Prostate gland (tissue), 2 donors: ENCODE measurements at regions of chr15 and their contacts with region 1.

Region 1: DNA sequence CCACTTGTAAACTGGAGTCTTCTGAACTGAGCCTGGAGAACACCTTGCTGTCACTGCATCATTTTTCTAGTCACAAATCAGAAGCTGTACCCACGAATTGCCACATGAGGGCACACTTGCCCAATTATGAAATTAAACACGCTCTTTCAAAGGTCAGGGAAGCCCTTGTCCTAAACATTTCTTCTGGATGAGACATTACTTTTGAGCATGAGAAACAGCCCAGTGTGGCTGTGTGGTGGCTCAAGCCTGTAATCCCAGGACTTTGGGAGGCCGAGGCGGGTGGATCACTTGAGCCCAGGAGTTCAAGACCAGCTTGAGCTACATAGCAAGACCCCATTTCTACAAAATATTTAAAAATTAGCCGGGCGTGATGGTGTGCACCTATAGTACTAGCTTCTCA is 27.5 kb upstream of the CFAP161 start:
- DNase-seq: peak; percentile 51
- H3K4me3 ChIP-seq: no peak overlapping the region
- H3K27ac ChIP-seq: no peak overlapping the region
- H3K4me1 ChIP-seq: no peaks in the 10 kb centered on the region
- H3K27me3 ChIP-seq: no peaks in the 10 kb centered on the region
- CTCF ChIP-seq: peak; percentile 42 to 81 (median 76)
- POLR2A ChIP-seq: no peak

Region 2: DNA sequence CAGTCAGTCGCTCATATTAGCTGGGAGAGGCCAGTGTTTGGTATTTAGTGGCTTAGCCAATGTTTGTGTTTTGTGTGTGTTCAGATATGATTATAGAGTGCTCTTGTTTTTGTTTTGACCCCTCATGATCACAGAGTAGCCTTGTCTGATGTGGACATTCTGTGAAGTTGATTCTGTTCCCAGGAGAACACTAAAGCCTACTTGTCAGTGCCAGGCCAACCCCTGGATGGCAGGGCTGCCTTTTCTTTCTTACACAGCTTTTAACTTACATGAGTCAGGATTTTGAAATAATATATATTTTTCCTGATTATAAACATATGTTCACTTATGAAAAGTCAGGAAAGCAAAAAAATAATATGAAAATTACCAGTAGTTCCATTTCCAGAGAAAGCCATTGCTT is 39.4 kb after region 1 on chr15:
- intact Hi-C with region 1: no loop called
- DNase-seq: no peak
- H3K4me3 ChIP-seq: no peak overlapping the region
- H3K27ac ChIP-seq: no peak overlapping the region
- H3K4me1 ChIP-seq: no peaks in the 10 kb centered on the region
- H3K27me3 ChIP-seq: no peaks in the 10 kb centered on the region
- CTCF ChIP-seq: no peak
- POLR2A ChIP-seq: no peak

Region 3: DNA sequence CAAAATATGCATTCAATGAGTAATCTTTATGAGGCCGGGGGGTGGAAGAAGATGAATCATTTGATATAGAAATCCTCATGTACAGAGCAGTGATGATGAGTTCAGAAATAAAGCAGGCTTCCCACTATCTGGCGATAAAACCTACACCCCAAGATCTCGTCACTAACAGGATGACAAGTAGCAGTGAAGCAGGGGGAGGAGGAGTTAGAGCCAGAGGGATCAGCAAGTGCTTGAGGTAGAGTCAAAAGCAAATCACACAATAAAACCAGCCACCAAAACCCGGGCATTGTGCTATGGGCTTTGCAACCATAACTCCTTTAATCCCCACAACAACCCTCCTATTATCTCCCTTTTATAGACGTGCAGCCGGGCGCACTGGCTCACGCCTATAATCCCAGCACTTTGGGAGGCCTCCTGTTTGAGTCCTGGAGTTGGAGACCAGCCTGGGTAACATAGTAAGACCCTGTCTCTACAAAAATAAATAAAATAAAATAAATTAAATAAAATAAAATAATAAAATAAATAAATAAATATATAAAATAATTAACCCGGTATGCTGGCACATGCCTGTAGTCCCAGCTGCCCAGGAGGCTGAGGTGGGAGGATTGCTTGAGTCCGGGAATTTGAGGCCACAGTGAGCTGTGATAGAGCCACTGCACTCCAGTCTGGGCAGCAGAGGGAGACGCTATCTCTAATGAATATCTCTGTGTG is 164.4 kb after region 1 on chr15:
- intact Hi-C with region 1: no loop called
- DNase-seq: no peak
- H3K4me3 ChIP-seq: no peak overlapping the region
- H3K27ac ChIP-seq: no peak overlapping the region
- H3K4me1 ChIP-seq: peaks cover under 1% of the 10 kb centered on the region
- H3K27me3 ChIP-seq: no peaks in the 10 kb centered on the region
- CTCF ChIP-seq: no peak
- POLR2A ChIP-seq: no peak

Region 4: DNA sequence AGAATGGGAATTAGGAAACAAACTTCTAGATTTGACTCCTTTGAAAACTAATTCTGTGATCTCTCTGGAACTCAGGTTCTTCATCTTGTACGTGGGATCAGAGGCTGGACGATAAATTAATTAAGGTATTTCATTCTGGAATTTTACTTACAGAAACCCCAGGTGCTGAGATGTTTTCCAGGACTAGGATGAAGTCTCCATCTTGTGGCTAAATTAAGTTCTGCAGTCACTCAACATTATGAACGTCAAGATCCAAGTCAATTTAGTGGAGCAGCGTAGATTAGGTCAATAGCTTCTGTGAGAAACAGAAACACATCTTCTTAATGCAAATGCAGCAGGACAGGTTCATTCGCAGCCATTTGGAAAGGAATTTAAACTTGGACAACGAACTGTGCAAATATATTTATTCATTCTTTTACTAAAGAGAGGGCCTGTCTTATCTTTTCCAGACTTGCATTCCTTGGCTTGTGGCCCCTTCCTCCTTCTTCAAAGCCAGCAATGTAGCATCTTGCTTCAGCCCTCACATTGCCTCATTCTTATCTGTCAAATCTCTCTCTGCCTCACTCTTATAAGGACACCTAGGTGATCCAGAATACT is 294.2 kb after region 1 on chr15:
- intact Hi-C with region 1: loop called (anchors 10 kb)
- DNase-seq: peak; percentile 42
- H3K4me3 ChIP-seq: no peak overlapping the region
- H3K27ac ChIP-seq: no peak overlapping the region
- H3K4me1 ChIP-seq: peaks cover 5% of the 10 kb centered on the region
- H3K27me3 ChIP-seq: no peaks in the 10 kb centered on the region
- CTCF ChIP-seq: peak; percentile 65 to 90 (median 87)
- POLR2A ChIP-seq: no peak